ENCODE measurements at regions of chr17 and their contacts with region 1.

Region 1: GRCh38 chr17:43211480-43212402 is at the start of gene TMEM106A:
- DNase-seq: peak; percentile 79 to 91 (median 86)
- ATAC-seq: peak; percentile 84 to 95 (median 90)
- H3K4me3 ChIP-seq: peak within 1 kb of the TSS; percentile 34 to 70 (median 44)
- H3K27ac ChIP-seq: peak within 1 kb of the TSS; percentile 69 to 93 (median 77)
- H3K4me1 ChIP-seq: peaks cover 4 to 29% (median 18%) of the 10 kb centered on the region in 3 donors
- H3K27me3 ChIP-seq: no peaks in the 10 kb centered on the region
- CTCF ChIP-seq: peak in 2 of 4 donors; percentile 10 to 18
- total RNA-seq, gene TMEM106A: 2.6 to 7.9 (median 4.4) TPM

Region 2: GRCh38 chr17:43006639-43007551 is 204.8 kb before region 1 on chr17 and contains the start of gene IFI35:
- intact Hi-C with region 1: loop called in 1 of 3 experiments (anchors 10 kb)
- DNase-seq: peak; percentile 79 to 92 (median 84)
- ATAC-seq: peak; percentile 88 to 97 (median 94)
- H3K4me3 ChIP-seq: peak within 1 kb of the TSS; percentile 47 to 71 (median 58)
- H3K27ac ChIP-seq: peak within 1 kb of the TSS; percentile 83 to 96 (median 92)
- H3K4me1 ChIP-seq: peaks cover 0 to 9% (median 0%) of the 10 kb centered on the region in 3 donors
- H3K27me3 ChIP-seq: no peaks in the 10 kb centered on the region
- CTCF ChIP-seq: peak in 2 of 4 donors; percentile 11 to 13
- total RNA-seq, gene IFI35: 6.0 to 19.9 (median 7.7) TPM

Region 3: DNA sequence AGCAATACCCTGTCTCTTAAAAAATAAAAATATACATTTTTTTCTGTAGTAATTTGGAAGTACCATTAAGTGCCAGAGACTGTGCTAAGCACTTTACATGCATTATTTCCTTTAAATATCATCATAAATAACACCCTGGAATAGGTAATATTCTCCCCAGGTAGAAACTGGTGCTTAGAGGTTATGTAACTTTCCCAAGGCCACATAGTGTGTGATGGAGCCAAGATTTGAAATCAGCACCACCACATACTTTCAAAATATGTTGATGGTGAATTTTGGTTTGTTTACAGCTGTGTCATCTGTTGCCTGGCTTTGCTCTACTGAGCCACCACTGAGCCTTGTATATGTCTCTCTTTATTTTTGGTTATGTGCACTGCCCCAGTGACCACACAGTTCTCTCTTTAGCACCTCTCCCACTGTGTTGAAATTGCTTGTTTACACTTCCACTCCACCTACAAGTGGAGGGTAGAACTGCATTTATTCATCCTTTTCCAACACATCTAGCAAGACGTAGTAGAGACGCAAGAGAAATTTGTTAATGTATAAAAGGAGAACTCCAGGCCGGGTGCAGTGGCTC is 59.8 kb before region 1 on chr17:
- intact Hi-C with region 1: no loop called
- DNase-seq: no peak
- ATAC-seq: peak in 1 of 4 donors; percentile 21
- H3K4me3 ChIP-seq: no peak overlapping the region
- H3K27ac ChIP-seq: no peak overlapping the region
- H3K4me1 ChIP-seq: no peaks in the 10 kb centered on the region
- H3K27me3 ChIP-seq: no peaks in the 10 kb centered on the region
- CTCF ChIP-seq: no peak

Region 4: DNA sequence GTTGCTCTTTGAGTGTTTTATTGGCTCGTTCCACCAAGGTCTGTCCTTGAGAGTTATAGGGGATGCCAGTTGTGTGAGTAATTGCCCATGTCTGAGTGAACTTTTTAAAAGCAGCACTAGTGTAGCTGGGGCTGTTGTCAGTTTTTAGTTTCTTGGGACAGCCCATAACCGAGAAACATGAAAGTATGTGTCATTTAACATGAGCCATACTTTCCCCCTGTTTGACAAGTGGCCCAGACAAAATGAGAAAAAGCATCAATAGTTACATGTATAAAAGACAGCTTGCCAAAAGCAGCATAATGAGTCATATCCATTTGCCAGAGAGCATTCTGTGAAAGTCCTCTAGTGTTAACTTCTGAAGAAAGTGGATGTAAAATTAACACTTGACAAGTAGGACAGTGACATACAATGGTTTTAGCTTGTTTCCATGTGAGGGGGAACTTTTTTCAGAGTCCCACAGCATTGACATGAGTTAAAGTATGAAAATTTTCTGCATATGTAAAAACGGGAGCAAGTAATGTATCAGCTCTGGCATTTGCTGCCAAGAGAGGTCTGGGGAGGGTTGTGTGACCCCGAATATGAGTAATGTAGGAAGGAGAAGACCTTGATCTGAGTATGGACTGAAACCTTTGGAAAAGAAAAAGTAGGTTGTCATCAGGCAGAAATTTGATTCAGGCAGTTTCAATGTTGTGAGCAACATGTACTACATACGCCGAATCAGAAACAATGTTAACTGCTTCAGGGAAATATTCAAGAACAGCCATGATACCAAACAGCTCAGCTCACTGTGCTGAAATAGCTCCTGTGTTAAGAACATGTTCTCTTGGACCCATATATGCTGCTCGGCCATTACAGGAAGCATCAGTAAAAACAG is 130.2 kb after region 1 on chr17:
- intact Hi-C with region 1: no loop called
- DNase-seq: no peak
- ATAC-seq: no peak
- H3K4me3 ChIP-seq: no peak overlapping the region
- H3K27ac ChIP-seq: no peak overlapping the region
- H3K4me1 ChIP-seq: peaks cover 0 to 4% (median 0%) of the 10 kb centered on the region in 3 donors
- H3K27me3 ChIP-seq: no peaks in the 10 kb centered on the region
- CTCF ChIP-seq: no peak

Measured in pancreas (tissue), 10 donors.